Dorsolateral prefrontal cortex (tissue), 120 donors: ENCODE measurements at regions of chrX and their contacts with region 1.

Region 1: GRCh38 chrX:13167481-13168231 is 123.2 kb upstream of the FAM9C start:
- DNase-seq: no peak
- H3K4me3 ChIP-seq: no peak overlapping the region
- H3K27ac ChIP-seq: peak overlapping the region in 18 of 59 donors; percentile 1 to 64 (median 24)
- H3K27me3 ChIP-seq: peaks cover 0 to 40% (median 4%) of the 10 kb centered on the region in 45 donors
- CTCF ChIP-seq: no peak

Region 2: GRCh38 chrX:13092455-13092941 is 75.2 kb before region 1 on chrX:
- intact Hi-C with region 1: loop called in 1 of 2 experiments (anchors 10 kb)
- DNase-seq: no peak
- H3K4me3 ChIP-seq: no peak overlapping the region
- H3K27ac ChIP-seq: peak overlapping the region in 10 of 59 donors; percentile 2 to 83 (median 56)
- H3K27me3 ChIP-seq: peaks cover 0 to 42% (median 3%) of the 10 kb centered on the region in 45 donors
- CTCF ChIP-seq: no peak